Activated naive CD8-positive, alpha-beta T cell treated with anti-CD3 and anti-CD28 coated beads, Interleukin-2, amount 10 ng/mL, durations not matched to agents 7 days and 5 days (primary cell): ENCODE measurements at regions of chr12 and their contacts with region 1.

Region 1: GRCh38 chr12:104456417-104456949 is at the start of gene CHST11:
- DNase-seq: no peak
- ATAC-seq: peak; percentile 75
- H3K4me3 Mint-ChIP-seq: peak within 1 kb of the TSS; percentile 99
- H3K27ac Mint-ChIP-seq: peak within 1 kb of the TSS; percentile 94
- H3K4me1 Mint-ChIP-seq: peaks cover 29% of the 10 kb centered on the region
- H3K27me3 Mint-ChIP-seq: no peaks in the 10 kb centered on the region
- total RNA-seq, gene CHST11: 64.9 to 72.9 TPM

Region 2: DNA sequence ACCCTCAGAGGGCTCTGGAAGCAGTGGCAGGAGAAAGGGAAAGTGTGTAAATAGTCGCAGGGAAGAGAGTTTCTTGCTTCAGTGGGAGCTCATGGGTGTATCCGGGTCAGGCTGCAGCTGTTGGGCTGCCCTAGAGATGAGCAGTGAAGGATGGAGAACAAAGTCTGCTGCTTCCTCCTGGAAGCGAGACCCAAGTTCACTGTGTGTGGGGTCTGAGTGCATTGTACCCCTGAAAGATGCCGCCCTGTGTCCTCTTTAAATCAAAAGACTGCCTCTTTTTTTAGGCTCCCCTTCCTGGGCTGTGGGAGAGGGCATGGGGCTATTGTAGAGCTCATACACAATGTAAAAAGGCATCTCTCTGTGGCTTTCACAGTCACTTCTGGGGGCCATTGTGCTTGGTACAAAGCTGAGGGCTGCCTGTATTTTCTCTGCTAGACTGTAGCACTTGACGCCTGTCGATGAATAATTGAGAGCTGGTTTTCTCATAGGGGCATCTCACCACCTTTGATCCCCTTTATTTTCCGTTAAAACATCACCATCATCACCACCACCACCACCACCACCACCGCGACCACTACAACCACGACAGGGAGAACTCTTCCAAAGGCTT is 17.0 kb after region 1 on chr12:
- POLR2A ChIA-PET with region 1: interaction called, 63 read pairs
- DNase-seq: peak; percentile 53
- ATAC-seq: peak; percentile 52
- H3K4me3 Mint-ChIP-seq: peak overlapping the region; percentile 69
- H3K27ac Mint-ChIP-seq: peak overlapping the region; percentile 79
- H3K4me1 Mint-ChIP-seq: peaks cover 77% of the 10 kb centered on the region
- H3K27me3 Mint-ChIP-seq: no peaks in the 10 kb centered on the region

Region 3: GRCh38 chr12:104485651-104486362 is 29.3 kb after region 1 on chr12:
- POLR2A ChIA-PET with region 1: interaction called, 25 read pairs
- DNase-seq: peak; percentile 50
- ATAC-seq: peak; percentile 93
- H3K4me3 Mint-ChIP-seq: peak overlapping the region; percentile 66
- H3K27ac Mint-ChIP-seq: peak overlapping the region; percentile 84
- H3K4me1 Mint-ChIP-seq: peaks cover 78% of the 10 kb centered on the region
- H3K27me3 Mint-ChIP-seq: no peaks in the 10 kb centered on the region

Region 4: GRCh38 chr12:104515924-104516323 is 59.4 kb after region 1 on chr12:
- POLR2A ChIA-PET with region 1: interaction called, 10 read pairs
- DNase-seq: no peak
- ATAC-seq: no peak
- H3K4me3 Mint-ChIP-seq: no peak overlapping the region
- H3K27ac Mint-ChIP-seq: no peak overlapping the region
- H3K4me1 Mint-ChIP-seq: peaks cover 55% of the 10 kb centered on the region
- H3K27me3 Mint-ChIP-seq: no peaks in the 10 kb centered on the region

Region 5: GRCh38 chr12:104615048-104615561 is 158.6 kb after region 1 on chr12:
- POLR2A ChIA-PET with region 1: no interaction called
- DNase-seq: no peak
- ATAC-seq: no peak
- H3K4me3 Mint-ChIP-seq: no peak overlapping the region
- H3K27ac Mint-ChIP-seq: no peak overlapping the region
- H3K4me1 Mint-ChIP-seq: peaks cover 14% of the 10 kb centered on the region
- H3K27me3 Mint-ChIP-seq: no peaks in the 10 kb centered on the region